OCI-LY7 (cell line): ENCODE measurements at regions of chr12 and their contacts with region 1.

Region 1: GRCh38 chr12:949453-950191 is at the start of gene RAD52:
- DNase-seq: peak; percentile 99
- H3K4me3 ChIP-seq: peak within 1 kb of the TSS; percentile 75
- H3K27ac ChIP-seq: peak within 1 kb of the TSS; percentile 84
- H3K4me1 ChIP-seq: peaks cover 21% of the 10 kb centered on the region
- CTCF ChIP-seq: peak; percentile 90
- total RNA-seq, gene RAD52: 30.8 and 31.8 TPM in 2 replicates

Region 2: GRCh38 chr12:575948-576612 is 373.5 kb before region 1 on chr12:
- CTCF ChIA-PET with region 1: interaction called, 4 read pairs
- POLR2A ChIA-PET with region 1: no interaction called
- intact Hi-C with region 1: loop called (anchors 2 kb)
- DNase-seq: peak; percentile 87
- H3K4me3 ChIP-seq: no peak overlapping the region
- H3K27ac ChIP-seq: no peak overlapping the region
- H3K4me1 ChIP-seq: peaks cover 13% of the 10 kb centered on the region
- CTCF ChIP-seq: peak; percentile 98

Region 3: DNA sequence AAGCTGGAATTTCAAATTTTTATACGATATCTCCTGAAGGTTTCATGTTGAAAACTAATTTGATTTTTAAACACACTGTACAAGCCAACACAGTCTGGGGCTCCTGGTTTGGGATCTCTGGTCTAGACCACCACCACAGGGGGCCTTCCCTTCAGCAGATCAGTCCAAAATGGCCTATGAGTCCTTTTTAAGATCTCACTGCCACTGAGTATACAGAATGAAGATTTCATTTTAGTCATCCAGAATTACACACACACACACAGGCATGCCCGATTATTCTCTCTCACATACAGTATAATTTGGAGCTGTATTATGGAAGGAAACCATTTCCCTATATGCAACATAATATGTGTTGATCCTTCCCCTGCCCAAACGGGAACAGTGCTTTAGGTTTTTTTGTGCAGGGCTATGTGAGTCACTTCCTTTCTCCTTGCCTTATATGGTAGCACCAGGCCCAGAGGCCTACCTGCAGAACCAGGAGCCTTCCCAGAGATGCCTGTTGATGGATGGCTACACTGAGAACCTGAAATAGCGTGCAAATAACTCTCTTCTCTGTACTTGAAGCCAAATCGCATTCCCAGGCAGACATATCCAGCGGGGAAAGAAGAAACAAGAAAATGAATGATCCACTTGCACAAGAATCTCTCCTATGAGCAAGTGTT is 225.3 kb before region 1 on chr12:
- CTCF ChIA-PET with region 1: no interaction called
- POLR2A ChIA-PET with region 1: no interaction called
- intact Hi-C with region 1: no loop called
- DNase-seq: no peak
- H3K4me3 ChIP-seq: no peak overlapping the region
- H3K27ac ChIP-seq: no peak overlapping the region
- H3K4me1 ChIP-seq: peaks cover 27% of the 10 kb centered on the region
- CTCF ChIP-seq: no peak

Region 4: DNA sequence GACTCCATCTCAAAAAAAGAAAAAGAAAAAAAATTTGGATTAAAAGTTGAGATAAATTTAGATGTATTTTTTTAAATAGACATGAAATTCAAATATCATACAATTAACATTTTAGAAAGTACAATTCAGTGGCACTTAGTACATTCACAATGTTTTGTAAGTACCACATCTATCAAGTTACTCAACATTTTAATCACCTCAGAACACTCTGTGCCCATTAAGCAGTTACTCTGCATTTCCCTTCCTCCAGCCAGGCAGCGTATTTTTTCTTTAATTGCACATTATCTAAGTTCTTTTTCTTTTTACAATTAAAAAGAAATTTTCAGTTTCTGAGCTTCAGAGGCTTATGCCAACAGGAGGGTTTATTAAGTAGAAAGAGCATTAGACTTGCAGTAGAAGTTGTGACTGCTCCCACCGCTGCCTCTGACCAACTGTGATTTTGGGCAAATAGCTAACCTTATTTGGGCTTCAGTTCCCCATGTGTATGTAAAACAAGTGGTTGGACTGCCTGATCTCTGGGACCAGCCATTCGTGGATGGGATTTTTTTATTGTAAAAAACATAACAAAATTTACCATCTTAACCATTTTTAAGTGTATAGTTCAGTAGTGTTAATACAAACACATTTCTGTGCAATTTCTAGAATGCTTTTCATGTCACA is 131.6 kb before region 1 on chr12:
- CTCF ChIA-PET with region 1: no interaction called
- POLR2A ChIA-PET with region 1: no interaction called
- intact Hi-C with region 1: loop called (anchors 2 kb)
- DNase-seq: peak; percentile 12
- H3K4me3 ChIP-seq: no peak overlapping the region
- H3K27ac ChIP-seq: no peak overlapping the region
- H3K4me1 ChIP-seq: peaks cover 19% of the 10 kb centered on the region
- CTCF ChIP-seq: no peak

Region 5: GRCh38 chr12:1013618-1014489 is 64.2 kb after region 1 on chr12:
- CTCF ChIA-PET with region 1: no interaction called
- POLR2A ChIA-PET with region 1: no interaction called
- intact Hi-C with region 1: no loop called
- DNase-seq: no peak
- H3K4me3 ChIP-seq: no peak overlapping the region
- H3K27ac ChIP-seq: no peak overlapping the region
- H3K4me1 ChIP-seq: no peaks in the 10 kb centered on the region
- CTCF ChIP-seq: no peak

Region 6: GRCh38 chr12:1093166-1093751 is 143.6 kb after region 1 on chr12:
- CTCF ChIA-PET with region 1: no interaction called
- POLR2A ChIA-PET with region 1: interaction called, 3 read pairs
- intact Hi-C with region 1: loop called (anchors 5 kb)
- DNase-seq: peak; percentile 72
- H3K4me3 ChIP-seq: no peak overlapping the region
- H3K27ac ChIP-seq: no peak overlapping the region
- H3K4me1 ChIP-seq: no peaks in the 10 kb centered on the region
- CTCF ChIP-seq: peak; percentile 89